Panc1 (cell line): ENCODE measurements at regions of chr5 and their contacts with region 1.

Region 1: DNA sequence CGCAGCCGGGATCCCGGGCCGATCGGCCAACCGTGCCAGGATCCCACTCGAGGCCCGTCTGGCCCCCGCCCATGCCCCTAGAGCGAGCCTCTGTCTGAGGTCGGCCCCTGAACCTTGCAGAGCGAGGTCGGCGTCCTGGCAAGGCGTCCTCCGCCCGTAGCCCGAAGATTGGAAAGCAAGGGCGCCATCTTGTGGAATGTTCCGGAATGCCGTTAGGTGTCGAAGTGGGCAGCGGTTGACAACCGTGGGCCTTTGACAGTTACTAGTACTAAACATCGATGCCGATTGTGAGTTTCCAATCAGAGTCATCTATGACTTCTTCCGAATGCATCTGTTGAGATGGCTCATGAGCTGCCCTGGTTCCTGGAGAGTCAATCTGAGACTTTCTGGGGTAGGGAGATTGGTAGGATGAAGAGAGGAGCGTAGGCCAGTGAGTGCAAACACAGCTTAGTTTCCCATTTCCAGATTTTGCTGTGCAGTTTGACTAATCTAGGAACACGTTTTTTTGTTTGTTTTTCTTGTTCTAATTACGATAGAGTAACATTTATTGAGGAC is 923 bp upstream of the PLK2 start:
- DNase-seq: peak; percentile 72
- ATAC-seq: peak; percentile 72
- H3K4me3 ChIP-seq: peak overlapping the region; percentile 87 to 91
- H3K27ac ChIP-seq: peak overlapping the region; percentile 97
- H3K4me1 ChIP-seq: peaks cover 24% of the 10 kb centered on the region
- H3K27me3 ChIP-seq: no peaks in the 10 kb centered on the region
- CTCF ChIP-seq: peak; percentile 84

Region 2: DNA sequence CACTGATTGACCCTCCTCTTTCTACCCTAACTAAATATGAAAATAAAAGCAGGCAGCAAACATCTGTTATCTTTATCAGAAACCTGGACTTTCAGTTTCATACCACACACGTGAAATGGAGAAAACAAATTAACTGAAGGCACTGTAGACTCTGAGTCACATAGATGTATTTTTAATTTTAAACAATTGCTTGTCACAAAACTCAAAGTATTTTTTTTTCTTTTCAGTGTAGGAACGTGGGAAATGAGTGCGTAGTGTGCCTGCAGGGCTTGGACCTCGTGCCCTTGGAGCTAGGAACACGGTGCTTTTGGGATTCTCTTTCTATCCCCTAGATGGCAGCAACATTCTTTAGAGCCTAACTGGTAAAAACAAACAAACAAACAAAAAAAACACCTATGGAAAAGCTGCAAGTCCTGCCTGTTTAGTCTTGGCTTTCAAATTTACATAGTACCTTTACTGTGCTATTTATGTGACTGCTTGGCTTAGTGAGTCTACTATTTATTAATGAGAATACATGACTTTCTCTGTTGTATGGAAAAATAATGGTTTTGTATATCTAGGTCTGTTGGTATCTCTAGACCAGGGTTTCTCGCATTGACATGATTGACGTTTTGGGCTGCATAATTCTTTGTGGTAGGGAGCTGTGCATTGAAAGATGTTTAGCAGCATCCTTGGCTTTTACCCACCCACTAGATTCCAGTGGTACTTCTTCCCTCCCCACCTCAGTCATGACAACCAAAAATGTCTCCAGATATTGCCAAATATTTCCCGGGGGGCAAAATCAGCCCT is 961.4 kb before region 1 on chr5:
- CTCF ChIA-PET with region 1: interaction called, 9 read pairs
- POLR2A ChIA-PET with region 1: no interaction called
- in situ Hi-C with region 1: loop called (anchors 25 kb)
- intact Hi-C with region 1: loop called (anchors 1 kb)
- DNase-seq: no peak
- ATAC-seq: peak; percentile 84
- H3K4me3 ChIP-seq: peak overlapping the region in 1 of 2 experiments; percentile 10; a peak in 1 of 4 replicates
- H3K27ac ChIP-seq: peak overlapping the region; percentile 94
- H3K4me1 ChIP-seq: peaks cover 21% of the 10 kb centered on the region
- H3K27me3 ChIP-seq: no peaks in the 10 kb centered on the region
- CTCF ChIP-seq: peak; percentile 88

Region 3: DNA sequence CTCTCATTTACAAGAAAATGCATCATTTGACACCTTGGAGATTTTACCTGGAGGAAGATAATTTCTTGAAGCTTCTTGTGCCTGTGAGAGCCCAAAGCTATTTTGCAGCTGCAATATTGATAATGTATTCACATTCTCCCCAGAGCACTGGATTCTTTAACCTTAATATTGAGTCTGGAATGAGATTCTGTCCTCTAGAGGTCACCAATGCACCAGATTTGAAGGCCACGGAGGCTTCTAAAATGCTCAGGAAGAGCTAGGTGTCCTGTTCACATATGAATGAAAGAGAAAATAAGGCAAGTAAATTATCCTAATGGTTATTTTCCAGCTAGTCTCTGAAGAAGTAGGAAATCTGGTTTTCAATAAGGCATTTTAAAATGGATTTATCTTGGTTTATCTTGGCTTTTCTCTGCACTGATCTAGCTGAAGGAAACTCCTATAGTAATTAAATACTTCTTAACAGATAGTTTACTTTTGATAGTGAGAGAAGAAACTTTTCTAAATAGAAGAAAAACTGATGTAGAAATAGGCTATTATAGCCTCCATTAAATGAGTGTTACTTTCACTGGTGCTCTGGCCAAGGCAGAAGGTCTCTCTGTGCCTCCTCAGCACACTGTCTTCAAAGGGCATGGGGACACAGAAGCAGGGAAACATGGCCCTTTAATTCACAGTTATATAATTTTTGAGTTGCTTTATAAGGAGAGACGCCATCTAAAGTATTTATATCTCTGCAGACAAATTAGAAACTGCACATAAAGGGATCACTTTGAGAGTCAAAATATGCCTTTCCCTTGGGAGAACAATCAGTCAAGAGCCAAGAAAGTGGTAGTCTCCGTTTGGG is 681.2 kb before region 1 on chr5:
- CTCF ChIA-PET with region 1: interaction called, 10 read pairs
- POLR2A ChIA-PET with region 1: no interaction called
- in situ Hi-C with region 1: no loop called
- intact Hi-C with region 1: loop called (anchors 1 kb)
- DNase-seq: peak; percentile 61
- ATAC-seq: peak; percentile 89
- H3K4me3 ChIP-seq: no peak overlapping the region
- H3K27ac ChIP-seq: peak overlapping the region; percentile 89
- H3K4me1 ChIP-seq: peaks cover 28% of the 10 kb centered on the region
- H3K27me3 ChIP-seq: no peaks in the 10 kb centered on the region
- CTCF ChIP-seq: peak; percentile 71

Region 4: DNA sequence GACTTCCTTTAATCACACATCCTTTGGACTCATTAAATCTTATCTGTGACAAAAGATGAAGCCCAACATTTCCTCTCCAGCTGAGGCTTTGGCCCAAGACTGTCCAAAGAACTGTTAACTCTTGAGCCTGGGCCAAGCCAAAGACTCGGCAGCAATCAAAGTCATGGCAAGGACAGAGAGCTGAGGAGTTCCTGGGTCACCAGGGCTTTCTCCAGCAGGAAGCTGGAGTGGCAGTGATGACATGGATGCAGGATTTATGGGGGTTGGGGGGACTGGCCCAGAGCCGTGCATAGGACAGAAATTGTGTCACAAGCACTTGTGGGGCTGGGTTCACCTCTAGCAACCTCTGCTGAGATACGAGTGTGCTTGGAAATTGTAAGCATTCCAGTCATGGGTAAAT is 441.2 kb before region 1 on chr5:
- CTCF ChIA-PET with region 1: no interaction called
- POLR2A ChIA-PET with region 1: interaction called, 10 read pairs
- in situ Hi-C with region 1: no loop called
- intact Hi-C with region 1: no loop called
- DNase-seq: no peak
- ATAC-seq: no peak
- H3K4me3 ChIP-seq: no peak overlapping the region
- H3K27ac ChIP-seq: no peak overlapping the region
- H3K4me1 ChIP-seq: no peaks in the 10 kb centered on the region; the same call in 1 of the 2 replicates
- H3K27me3 ChIP-seq: no peaks in the 10 kb centered on the region
- CTCF ChIP-seq: no peak

Region 5: GRCh38 chr5:58259685-58260152 is 201.1 kb before region 1 on chr5:
- CTCF ChIA-PET with region 1: no interaction called
- POLR2A ChIA-PET with region 1: no interaction called
- in situ Hi-C with region 1: no loop called
- intact Hi-C with region 1: loop called (anchors 10 kb)
- DNase-seq: peak; percentile 76
- ATAC-seq: peak; percentile 96
- H3K4me3 ChIP-seq: peak overlapping the region; percentile 11 to 38; a peak in 3 of 4 replicates
- H3K27ac ChIP-seq: peak overlapping the region; percentile 94
- H3K4me1 ChIP-seq: peaks cover 18% of the 10 kb centered on the region
- H3K27me3 ChIP-seq: no peaks in the 10 kb centered on the region
- CTCF ChIP-seq: no peak

Region 6: DNA sequence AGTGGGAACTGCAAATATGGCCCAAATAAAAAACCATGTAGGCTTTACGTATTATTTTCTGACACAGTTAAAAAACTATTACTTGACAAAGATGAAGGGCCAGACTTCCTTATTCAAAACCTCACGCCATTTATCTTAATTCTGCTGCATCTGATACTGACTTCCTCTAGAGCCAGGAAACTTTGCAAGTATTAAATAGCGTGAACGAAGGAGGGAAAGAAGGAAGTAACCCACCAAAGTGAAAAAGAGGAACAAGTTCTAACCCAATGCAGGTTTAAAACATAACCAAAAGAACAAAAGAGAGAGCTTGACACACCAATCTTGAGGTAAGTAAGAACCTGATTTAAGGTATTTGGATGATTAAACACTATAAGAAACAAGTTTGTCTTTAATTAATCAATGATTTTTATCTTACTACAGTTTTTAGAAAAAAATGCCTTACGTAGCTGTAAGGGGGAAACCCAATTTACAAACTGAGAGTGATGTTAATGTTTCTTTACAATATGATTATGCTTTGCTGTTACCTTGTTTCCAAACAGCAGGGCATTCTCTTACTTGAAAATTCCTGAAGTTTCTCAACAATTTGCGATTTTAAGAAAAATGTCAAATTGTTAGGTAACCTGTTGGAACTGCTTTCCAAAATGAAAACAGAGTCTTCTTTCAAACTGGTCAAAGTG is 30.5 kb after region 1 on chr5 and contains the start of gene GAPT:
- CTCF ChIA-PET with region 1: no interaction called
- POLR2A ChIA-PET with region 1: no interaction called
- in situ Hi-C with region 1: no loop called
- intact Hi-C with region 1: no loop called
- DNase-seq: no peak
- ATAC-seq: no peak
- H3K4me3 ChIP-seq: no peak within 1 kb of the TSS
- H3K27ac ChIP-seq: no peak within 1 kb of the TSS
- H3K4me1 ChIP-seq: no peaks in the 10 kb centered on the region
- H3K27me3 ChIP-seq: peaks cover 50% of the 10 kb centered on the region
- CTCF ChIP-seq: no peak
- total RNA-seq, gene GAPT: not detected

Region 7: DNA sequence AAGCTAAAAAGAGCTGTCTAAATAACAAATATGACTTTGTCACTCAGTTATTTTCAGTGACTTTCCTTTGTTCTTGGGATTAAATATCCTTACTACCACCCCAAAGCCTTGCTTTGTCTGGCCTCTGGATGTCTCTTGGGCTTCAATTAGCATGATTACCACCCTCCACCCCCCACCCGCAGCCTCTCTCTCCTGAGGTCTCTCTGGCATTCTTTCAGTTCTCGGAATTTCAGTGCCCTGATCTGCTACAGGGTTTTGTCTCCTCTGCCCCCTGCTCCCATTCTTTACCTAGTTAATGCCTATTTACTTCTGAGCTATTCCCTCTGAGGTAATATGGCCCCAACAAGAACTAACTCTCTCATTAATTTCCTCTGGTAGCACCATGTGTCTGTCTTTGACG is 1862.8 kb after region 1 on chr5:
- CTCF ChIA-PET with region 1: no interaction called
- POLR2A ChIA-PET with region 1: no interaction called
- in situ Hi-C with region 1: no loop called
- intact Hi-C with region 1: no loop called
- DNase-seq: no peak
- ATAC-seq: no peak
- H3K4me3 ChIP-seq: no peak overlapping the region
- H3K27ac ChIP-seq: no peak overlapping the region
- H3K4me1 ChIP-seq: no peaks in the 10 kb centered on the region
- H3K27me3 ChIP-seq: no peaks in the 10 kb centered on the region
- CTCF ChIP-seq: no peak